Lower lobe of right lung (tissue), 2 donors: ENCODE measurements at regions of chr4 and their contacts with region 1.

Region 1: DNA sequence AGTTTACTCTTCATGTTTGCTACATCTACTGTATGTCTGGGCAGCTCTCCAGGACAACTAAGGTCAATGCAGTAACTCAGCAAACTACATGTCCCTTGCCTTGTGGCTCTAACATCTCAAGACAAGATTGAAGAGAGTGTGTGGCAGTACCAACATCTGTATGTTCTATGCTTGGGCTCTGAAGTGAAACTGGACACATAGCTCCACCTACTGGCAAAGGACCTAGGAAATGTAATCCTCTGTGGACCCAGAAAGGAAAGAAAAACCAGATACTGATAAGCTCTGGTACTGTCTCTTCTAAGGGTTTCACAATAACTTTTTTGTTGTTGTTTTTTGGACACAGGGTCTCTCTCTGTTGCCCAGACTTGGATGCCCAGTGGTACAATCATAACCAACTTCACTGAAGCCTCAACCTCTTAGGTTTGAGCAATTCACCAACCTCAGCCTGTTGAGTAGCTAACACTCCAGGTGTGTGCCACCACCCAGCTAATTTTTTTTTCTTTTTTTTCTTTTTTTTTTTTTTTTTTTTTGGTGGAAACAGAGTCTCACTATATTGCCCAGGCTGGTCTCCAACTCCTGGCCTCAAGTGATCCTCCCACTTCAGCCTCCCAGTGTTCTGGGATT is 64.1 kb downstream of the QDPR start:
- DNase-seq: no peak
- ATAC-seq: peak; percentile 79 to 83
- H3K4me3 ChIP-seq: no peak overlapping the region
- H3K27ac ChIP-seq: no peak overlapping the region
- H3K4me1 ChIP-seq: no peaks in the 10 kb centered on the region
- H3K27me3 ChIP-seq: no peaks in the 10 kb centered on the region
- CTCF ChIP-seq: peak; percentile 71

Region 2: GRCh38 chr4:17189401-17189720 is 258.4 kb before region 1 on chr4:
- intact Hi-C with region 1: no loop called
- DNase-seq: no peak
- ATAC-seq: peak; percentile 35
- H3K4me3 ChIP-seq: no peak overlapping the region
- H3K27ac ChIP-seq: no peak overlapping the region
- H3K4me1 ChIP-seq: no peaks in the 10 kb centered on the region
- H3K27me3 ChIP-seq: no peaks in the 10 kb centered on the region
- CTCF ChIP-seq: no peak

Region 3: GRCh38 chr4:17347445-17347844 is 100.3 kb before region 1 on chr4:
- intact Hi-C with region 1: loop called (anchors 10 kb)
- DNase-seq: no peak
- ATAC-seq: peak in 1 of 2 donors; percentile 29
- H3K4me3 ChIP-seq: no peak overlapping the region
- H3K27ac ChIP-seq: no peak overlapping the region
- H3K4me1 ChIP-seq: no peaks in the 10 kb centered on the region
- H3K27me3 ChIP-seq: no peaks in the 10 kb centered on the region
- CTCF ChIP-seq: peak; percentile 55